Mammary epithelial cell (primary cell): ENCODE measurements at regions of chr18 and their contacts with region 1.

Region 1: GRCh38 chr18:10205151-10205550 is 249.3 kb upstream of the APCDD1 start:
- DNase-seq: no peak
- H3K4me3 ChIP-seq: no peak overlapping the region
- H3K27ac ChIP-seq: no peak overlapping the region
- H3K4me1 ChIP-seq: no peaks in the 10 kb centered on the region
- H3K27me3 ChIP-seq: no peaks in the 10 kb centered on the region
- CTCF ChIP-seq: no peak

Region 2: GRCh38 chr18:10265560-10266333 is 60.6 kb after region 1 on chr18:
- CTCF ChIA-PET with region 1: no interaction called
- dilution Hi-C with region 1: loop called (anchors 5 kb)
- in situ Hi-C with region 1: no loop called
- intact Hi-C with region 1: no loop called
- DNase-seq: no peak
- H3K4me3 ChIP-seq: no peak overlapping the region
- H3K27ac ChIP-seq: no peak overlapping the region
- H3K4me1 ChIP-seq: no peaks in the 10 kb centered on the region
- H3K27me3 ChIP-seq: no peaks in the 10 kb centered on the region
- CTCF ChIP-seq: no peak